ENCODE measurements at regions of chr14 and their contacts with region 1.

Region 1: GRCh38 chr14:59354666-59355065 is 110.5 kb downstream of the GPR135 start:
- DNase-seq: no peak
- ATAC-seq: no peak
- H3K4me3 ChIP-seq: no peak overlapping the region
- H3K4me3 Mint-ChIP-seq: no peak overlapping the region
- H3K27ac ChIP-seq: no peak overlapping the region
- H3K27ac Mint-ChIP-seq: no peak overlapping the region
- H3K4me1 ChIP-seq: no peaks in the 10 kb centered on the region
- H3K4me1 Mint-ChIP-seq: peaks cover 5% of the 10 kb centered on the region
- H3K27me3 ChIP-seq: no peaks in the 10 kb centered on the region
- H3K27me3 Mint-ChIP-seq: no peaks in the 10 kb centered on the region
- CTCF ChIP-seq: no peak

Region 2: DNA sequence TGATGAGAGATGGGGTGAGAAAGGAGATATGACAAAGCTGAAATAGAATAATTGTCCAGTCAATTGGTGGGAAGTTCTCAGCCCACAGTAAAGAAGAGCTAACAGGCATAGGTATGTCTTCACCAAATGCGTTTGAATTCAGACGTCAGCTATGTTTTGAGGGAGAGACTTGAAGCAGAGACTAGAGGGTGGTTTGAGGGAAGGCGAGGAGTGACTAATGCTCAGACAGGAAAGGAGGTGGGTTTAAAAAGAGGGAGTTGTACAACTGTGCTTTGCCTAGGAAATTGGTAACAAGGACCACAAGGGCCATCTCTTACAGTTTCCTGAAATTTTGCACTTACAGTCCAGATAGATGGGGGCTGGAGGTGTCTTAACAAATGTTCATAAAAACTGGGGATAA is 136.1 kb after region 1 on chr14:
- CTCF ChIA-PET with region 1: no interaction called
- POLR2A ChIA-PET with region 1: no interaction called
- intact Hi-C with region 1: no loop called
- DNase-seq: no peak
- ATAC-seq: no peak
- H3K4me3 ChIP-seq: no peak overlapping the region
- H3K4me3 Mint-ChIP-seq: no peak overlapping the region
- H3K27ac ChIP-seq: no peak overlapping the region
- H3K27ac Mint-ChIP-seq: no peak overlapping the region
- H3K4me1 ChIP-seq: peaks cover 9% of the 10 kb centered on the region
- H3K4me1 Mint-ChIP-seq: peaks cover 62% of the 10 kb centered on the region
- H3K27me3 ChIP-seq: no peaks in the 10 kb centered on the region
- H3K27me3 Mint-ChIP-seq: no peaks in the 10 kb centered on the region
- CTCF ChIP-seq: no peak

Region 3: DNA sequence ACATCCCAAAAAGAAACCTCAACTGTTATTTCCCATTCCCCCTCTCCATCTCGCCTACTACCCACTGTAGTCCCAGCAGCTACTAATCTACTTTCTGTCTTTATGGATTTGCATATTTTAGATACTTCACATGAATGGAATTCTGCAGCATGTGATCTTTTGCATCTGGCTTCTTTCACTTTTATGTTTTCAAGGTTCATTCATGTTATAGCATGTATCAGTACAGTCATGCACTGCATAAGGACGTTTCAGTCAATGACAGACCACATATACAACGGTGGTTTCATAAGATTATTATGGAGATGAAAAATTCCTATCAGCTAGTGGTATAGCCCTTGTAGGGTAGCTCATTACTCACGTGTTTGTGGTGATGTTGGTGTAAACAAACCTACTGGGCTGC is 761.5 kb after region 1 on chr14:
- CTCF ChIA-PET with region 1: no interaction called
- POLR2A ChIA-PET with region 1: no interaction called
- intact Hi-C with region 1: loop called in 1 of 2 experiments (anchors 5 kb)
- DNase-seq: no peak
- ATAC-seq: no peak
- H3K4me3 ChIP-seq: no peak overlapping the region
- H3K4me3 Mint-ChIP-seq: no peak overlapping the region
- H3K27ac ChIP-seq: no peak overlapping the region
- H3K27ac Mint-ChIP-seq: peak overlapping the region; percentile 27
- H3K4me1 ChIP-seq: no peaks in the 10 kb centered on the region
- H3K4me1 Mint-ChIP-seq: peaks cover 8% of the 10 kb centered on the region
- H3K27me3 ChIP-seq: no peaks in the 10 kb centered on the region
- H3K27me3 Mint-ChIP-seq: no peaks in the 10 kb centered on the region
- CTCF ChIP-seq: no peak